MCF 10A (cell line): ENCODE measurements at regions of chr19 and their contacts with region 1.

Region 1: DNA sequence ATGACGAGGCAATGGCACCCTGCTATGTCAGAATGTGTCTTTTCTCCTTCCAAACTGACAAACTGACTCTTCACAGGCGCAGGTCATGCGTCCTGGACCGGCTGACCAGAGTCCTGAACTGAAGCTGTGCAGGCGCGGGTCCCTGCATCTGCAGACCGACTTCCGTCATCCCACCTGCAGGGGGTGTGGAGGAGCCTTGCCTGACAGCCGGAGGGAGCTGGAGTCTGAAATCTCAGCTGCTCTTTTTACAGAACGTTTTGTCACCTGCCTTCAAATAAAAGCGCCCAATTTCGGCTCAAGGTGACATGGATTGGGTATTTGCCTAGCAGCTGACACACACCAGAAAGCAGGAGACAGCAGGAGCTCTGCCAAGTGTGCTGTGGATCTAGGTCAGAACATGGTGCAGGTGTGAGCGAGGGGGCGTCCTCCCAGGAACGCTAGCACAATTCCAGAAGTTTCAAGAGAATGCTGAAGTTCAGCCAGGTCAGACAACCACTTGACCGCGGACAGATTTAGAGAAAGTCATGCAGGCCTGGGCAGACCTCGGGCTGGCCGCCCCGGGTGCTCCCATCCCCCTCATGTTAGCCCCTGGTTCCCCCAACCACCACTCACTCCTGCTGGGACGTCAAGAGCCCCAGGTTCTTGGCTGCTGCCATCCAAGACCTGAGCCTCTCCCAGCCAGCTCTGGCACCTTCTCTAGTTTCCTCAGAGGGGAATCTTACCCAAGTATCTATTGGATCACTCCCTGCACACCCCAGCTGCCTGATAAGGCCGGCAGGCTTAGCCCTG is 32.8 kb downstream of the ELL start:
- DNase-seq: peak; percentile 33
- H3K4me3 Mint-ChIP-seq: no peak overlapping the region
- H3K27ac Mint-ChIP-seq: no peak overlapping the region
- H3K4me1 Mint-ChIP-seq: peaks cover 32% of the 10 kb centered on the region
- H3K27me3 Mint-ChIP-seq: no peaks in the 10 kb centered on the region
- CTCF ChIP-seq: no peak

Region 2: DNA sequence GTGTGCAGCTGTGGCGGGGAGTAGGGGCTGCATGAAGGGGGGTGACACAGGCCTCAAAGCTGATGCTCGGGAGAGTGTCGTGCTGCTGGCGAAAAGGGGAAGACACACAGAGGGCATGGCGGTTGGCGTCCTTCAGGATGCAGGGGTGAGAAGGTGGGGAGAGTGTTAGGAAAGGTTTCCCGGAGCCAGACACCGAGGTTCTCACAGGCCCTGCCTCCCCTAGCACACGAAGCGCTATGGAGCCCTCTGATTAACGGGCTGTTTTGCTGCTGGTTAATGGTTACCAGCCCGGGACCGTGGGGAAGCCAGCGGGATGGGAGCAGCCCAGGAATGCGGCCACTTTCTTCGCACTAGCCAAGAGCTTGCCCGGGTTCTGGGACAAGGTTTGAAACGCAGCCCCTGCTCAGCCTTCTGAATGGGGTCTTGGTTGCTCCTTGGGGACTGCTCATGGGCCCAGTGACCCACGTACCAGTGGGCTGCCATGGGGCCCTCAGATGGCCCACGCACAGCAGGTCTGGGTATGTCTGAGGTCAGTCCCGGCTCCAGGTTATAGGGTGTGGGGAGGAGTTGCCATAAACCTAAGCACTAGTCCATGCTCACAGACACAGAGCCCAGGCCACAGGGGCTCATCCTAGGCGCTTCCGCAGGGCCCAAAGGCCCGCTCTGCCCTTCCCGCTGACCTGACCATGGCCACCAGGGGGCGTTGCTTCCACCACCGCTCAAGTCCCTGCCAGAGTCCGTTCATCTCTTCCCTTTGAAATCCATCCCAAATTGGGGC is 19.8 kb before region 1 on chr19:
- CTCF ChIA-PET with region 1: interaction called, 19 read pairs
- POLR2A ChIA-PET with region 1: no interaction called
- intact Hi-C with region 1: no loop called
- DNase-seq: peak; percentile 57
- H3K4me3 Mint-ChIP-seq: no peak overlapping the region
- H3K27ac Mint-ChIP-seq: no peak overlapping the region
- H3K4me1 Mint-ChIP-seq: peaks cover 26% of the 10 kb centered on the region
- H3K27me3 Mint-ChIP-seq: no peaks in the 10 kb centered on the region
- CTCF ChIP-seq: peak; percentile 84